Posterior vena cava (tissue), 2 donors: ENCODE measurements at regions of chr1 and their contacts with region 1.

Region 1: GRCh38 chr1:44213222-44214112 is at the start of gene DMAP1:
- DNase-seq: peak; percentile 95
- total RNA-seq, gene DMAP1: 18.5 to 23.6 TPM

Region 2: GRCh38 chr1:44089371-44090049 is 124.0 kb before region 1 on chr1:
- intact Hi-C with region 1: no loop called
- DNase-seq: no peak

Region 3: DNA sequence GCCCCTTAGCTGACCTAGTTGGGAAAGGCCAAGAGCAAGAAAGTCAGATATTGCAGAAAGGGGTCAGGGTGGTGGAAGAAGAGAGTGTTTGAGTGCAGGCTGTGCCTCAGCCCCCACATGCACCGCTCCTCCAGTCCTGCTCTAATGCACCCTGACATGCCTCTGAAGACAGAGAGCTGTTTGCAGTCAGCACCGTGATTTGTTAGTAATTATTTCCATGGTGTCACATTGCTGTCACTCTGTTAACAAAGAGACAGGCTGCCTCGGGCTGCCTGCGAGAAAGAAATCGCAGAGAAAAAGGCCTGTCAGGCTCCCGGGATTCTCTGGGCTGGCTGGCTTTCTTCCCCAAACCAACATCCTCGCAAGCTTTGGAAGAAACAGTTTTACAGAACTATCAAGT is 83.3 kb after region 1 on chr1:
- intact Hi-C with region 1: loop called in 1 of 2 experiments (anchors 2 kb)
- DNase-seq: no peak